Activated CD8-positive, alpha-beta memory T cell treated with anti-CD3 and anti-CD28 coated beads, Interleukin-2, amount 10 ng/mL, durations not matched to agents 7 days and 5 days (primary cell): ENCODE measurements at regions of chr11 and their contacts with region 1.

Region 1: DNA sequence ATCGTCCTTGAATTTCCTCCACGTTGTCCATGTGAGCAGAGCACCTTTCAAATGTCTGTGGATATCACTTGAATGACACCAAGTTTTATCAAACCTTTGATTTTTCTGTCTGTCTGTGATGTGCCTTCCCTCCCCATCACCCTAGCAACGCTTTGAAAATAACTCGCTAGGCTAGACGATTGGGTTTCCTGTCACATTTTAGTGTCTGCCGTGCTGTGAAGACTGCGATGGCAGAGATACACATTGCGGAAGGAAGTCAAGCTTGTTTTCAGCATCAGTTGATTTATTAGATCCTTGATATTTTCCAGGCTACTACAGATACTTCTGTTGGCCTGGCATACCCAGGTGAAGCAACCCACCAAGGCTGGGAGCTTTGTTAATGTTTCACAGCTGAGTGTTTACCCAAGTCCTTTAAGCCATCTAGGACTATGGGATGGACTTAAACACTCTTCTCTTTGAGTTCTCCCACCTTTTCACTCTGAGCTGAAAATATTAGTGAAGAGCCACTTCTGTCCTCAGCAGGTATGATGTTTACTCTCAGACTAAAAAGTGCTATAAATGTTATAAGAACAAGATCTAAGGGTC is 93.6 kb upstream of the CD44 start:
- DNase-seq: peak; percentile 87
- ATAC-seq: peak; percentile 80
- H3K4me3 Mint-ChIP-seq: peak overlapping the region; percentile 61
- H3K27ac Mint-ChIP-seq: peak overlapping the region; percentile 70
- H3K4me1 Mint-ChIP-seq: peaks cover 68% of the 10 kb centered on the region
- H3K27me3 Mint-ChIP-seq: peaks cover 2% of the 10 kb centered on the region

Region 2: GRCh38 chr11:34988294-34989255 is 56.8 kb before region 1 on chr11:
- CTCF ChIA-PET with region 1: no interaction called
- DNase-seq: no peak
- ATAC-seq: no peak
- H3K4me3 Mint-ChIP-seq: no peak overlapping the region
- H3K27ac Mint-ChIP-seq: no peak overlapping the region
- H3K4me1 Mint-ChIP-seq: peaks cover 12% of the 10 kb centered on the region
- H3K27me3 Mint-ChIP-seq: no peaks in the 10 kb centered on the region

Region 3: GRCh38 chr11:35006389-35007128 is 38.8 kb before region 1 on chr11:
- CTCF ChIA-PET with region 1: interaction called, 11 read pairs
- DNase-seq: peak; percentile 83
- ATAC-seq: peak; percentile 93
- H3K4me3 Mint-ChIP-seq: no peak overlapping the region
- H3K27ac Mint-ChIP-seq: peak overlapping the region; percentile 49
- H3K4me1 Mint-ChIP-seq: peaks cover 53% of the 10 kb centered on the region
- H3K27me3 Mint-ChIP-seq: peaks cover 37% of the 10 kb centered on the region

Region 4: GRCh38 chr11:35114906-35115687 is 69.8 kb after region 1 on chr11:
- CTCF ChIA-PET with region 1: no interaction called
- DNase-seq: no peak
- ATAC-seq: no peak
- H3K4me3 Mint-ChIP-seq: no peak overlapping the region
- H3K27ac Mint-ChIP-seq: no peak overlapping the region
- H3K4me1 Mint-ChIP-seq: peaks cover 20% of the 10 kb centered on the region
- H3K27me3 Mint-ChIP-seq: peaks cover 32% of the 10 kb centered on the region